Mammary epithelial cell (primary cell): ENCODE measurements at regions of chr10 and their contacts with region 1.

Region 1: DNA sequence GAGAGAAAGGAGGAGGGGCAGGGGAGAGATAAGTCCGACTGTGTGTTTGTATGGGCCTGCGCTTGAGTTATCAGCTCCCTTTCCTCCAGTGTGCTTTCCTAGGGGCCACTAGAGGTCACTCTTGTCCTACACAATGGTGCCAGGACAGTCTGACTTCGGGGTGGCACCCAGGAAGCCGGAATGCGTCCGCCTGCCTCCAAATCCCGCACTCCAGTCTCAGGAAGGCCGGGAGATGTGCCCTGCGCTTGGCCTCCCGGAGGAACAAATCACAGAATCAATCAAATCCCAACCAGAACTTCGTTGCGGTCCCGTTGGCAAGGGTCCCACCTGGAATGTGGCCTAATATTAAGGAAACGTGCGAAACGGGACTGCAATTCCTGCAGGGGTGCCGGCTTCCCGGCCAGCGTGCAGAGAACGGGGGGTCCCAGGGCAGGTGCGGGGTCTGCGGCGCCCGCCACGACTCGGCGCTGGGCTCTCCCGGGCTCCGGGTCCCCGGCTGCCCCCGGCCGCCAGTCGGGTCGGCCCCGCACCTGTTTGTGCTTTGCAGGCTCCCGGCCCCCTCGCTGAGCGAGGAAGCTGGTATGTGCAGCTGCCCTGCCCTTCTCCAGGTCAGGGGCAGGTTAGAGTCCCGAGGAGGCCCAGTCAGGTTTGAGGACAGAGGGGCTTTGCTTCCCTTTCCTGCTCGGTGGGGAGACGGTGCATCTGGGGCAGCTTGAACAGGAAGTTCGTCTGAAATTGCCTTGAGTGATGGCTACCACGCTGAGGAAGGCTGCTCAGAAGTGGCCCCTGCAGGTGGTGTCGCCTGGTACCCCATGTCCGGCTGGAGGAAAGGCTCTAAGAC is 21.0 kb upstream of the HPS1 start:
- DNase-seq: peak; percentile 73
- H3K4me3 ChIP-seq: peak overlapping the region; percentile 47 to 50 (median 48)
- H3K27ac ChIP-seq: no peak overlapping the region
- H3K4me1 ChIP-seq: peaks cover 7% of the 10 kb centered on the region
- H3K27me3 ChIP-seq: no peaks in the 10 kb centered on the region
- CTCF ChIP-seq: peak; percentile 85 to 91

Region 2: GRCh38 chr10:98425511-98426352 is 42.0 kb before region 1 on chr10:
- CTCF ChIA-PET with region 1: no interaction called
- dilution Hi-C with region 1: no loop called
- in situ Hi-C with region 1: no loop called
- intact Hi-C with region 1: loop called (anchors 2 kb)
- DNase-seq: peak; percentile 24
- H3K4me3 ChIP-seq: no peak overlapping the region
- H3K27ac ChIP-seq: no peak overlapping the region
- H3K4me1 ChIP-seq: no peaks in the 10 kb centered on the region
- H3K27me3 ChIP-seq: no peaks in the 10 kb centered on the region
- CTCF ChIP-seq: peak; percentile 88 to 93

Region 3: DNA sequence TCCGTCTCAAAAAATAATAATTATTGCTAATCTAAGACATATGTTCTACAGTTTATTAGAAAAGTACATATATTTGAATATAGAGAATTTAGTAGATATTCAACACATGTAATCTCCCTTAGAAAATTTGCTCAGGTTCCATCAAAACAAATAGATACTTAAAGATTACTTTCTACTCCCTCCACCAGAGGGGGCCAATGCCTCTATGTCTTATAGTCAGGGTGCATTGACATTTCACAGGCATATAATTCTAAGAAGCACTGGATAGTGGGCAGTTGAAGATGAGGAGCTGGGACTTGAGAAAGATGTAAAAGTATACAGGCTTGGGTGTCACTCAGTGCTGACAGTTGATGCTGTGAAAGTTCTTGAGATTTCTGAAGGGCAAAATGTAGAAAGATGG is 280.6 kb after region 1 on chr10:
- CTCF ChIA-PET with region 1: interaction called, 3 read pairs
- dilution Hi-C with region 1: no loop called
- in situ Hi-C with region 1: no loop called
- intact Hi-C with region 1: loop called (anchors 1 kb)
- DNase-seq: peak; percentile 23
- H3K4me3 ChIP-seq: no peak overlapping the region
- H3K27ac ChIP-seq: no peak overlapping the region
- H3K4me1 ChIP-seq: no peaks in the 10 kb centered on the region
- H3K27me3 ChIP-seq: peaks cover 2% of the 10 kb centered on the region
- CTCF ChIP-seq: peak; percentile 31 to 63

Region 4: DNA sequence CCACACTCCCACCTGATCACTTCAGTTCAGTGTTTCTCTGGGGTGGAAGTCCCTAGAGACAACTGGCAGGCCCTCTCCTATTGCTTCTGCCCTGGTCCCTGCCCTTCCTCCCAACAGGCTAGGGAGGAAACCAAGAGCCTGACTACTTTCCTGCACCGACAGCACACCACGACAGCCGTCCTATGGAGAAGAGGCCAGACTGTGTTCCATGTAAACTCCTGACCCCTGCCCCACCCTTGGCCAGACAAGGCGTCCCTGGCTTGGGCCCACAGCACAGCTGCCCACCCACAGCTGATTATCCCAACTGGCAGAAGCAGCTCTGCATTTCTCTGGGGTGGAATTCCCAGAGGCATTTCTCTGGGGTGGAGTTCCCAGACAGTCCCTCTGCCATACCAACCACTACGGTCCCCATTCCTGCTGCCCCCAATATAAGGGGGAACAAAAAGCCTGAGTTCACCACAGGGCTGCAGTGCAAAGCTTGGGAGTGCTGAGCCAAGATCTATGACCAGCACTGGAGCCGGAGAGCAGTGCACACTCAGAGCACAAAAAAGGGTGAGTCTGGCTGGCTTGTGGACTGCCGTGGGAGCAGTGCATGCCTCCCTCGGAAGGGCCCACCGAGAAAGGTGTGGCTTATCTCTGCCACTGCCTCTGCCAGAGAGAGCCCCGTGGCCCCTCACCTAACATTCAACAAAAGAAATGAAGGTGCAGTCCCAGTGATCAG is 574.5 kb after region 1 on chr10:
- CTCF ChIA-PET with region 1: no interaction called
- dilution Hi-C with region 1: no loop called
- in situ Hi-C with region 1: loop called in 1 of 2 experiments (anchors 5 kb)
- intact Hi-C with region 1: loop called (anchors 1 kb)
- DNase-seq: no peak
- H3K4me3 ChIP-seq: no peak overlapping the region
- H3K27ac ChIP-seq: no peak overlapping the region
- H3K4me1 ChIP-seq: no peaks in the 10 kb centered on the region
- H3K27me3 ChIP-seq: no peaks in the 10 kb centered on the region
- CTCF ChIP-seq: no peak

Region 5: GRCh38 chr10:99234041-99234790 is 766.5 kb after region 1 on chr10:
- CTCF ChIA-PET with region 1: interaction called, 3 read pairs
- dilution Hi-C with region 1: no loop called
- in situ Hi-C with region 1: loop called in 1 of 2 experiments (anchors 25 kb)
- intact Hi-C with region 1: no loop called
- DNase-seq: peak; percentile 18
- H3K4me3 ChIP-seq: peak overlapping the region; percentile 20 to 41 (median 36)
- H3K27ac ChIP-seq: no peak overlapping the region
- H3K4me1 ChIP-seq: no peaks in the 10 kb centered on the region
- H3K27me3 ChIP-seq: peaks cover 57% of the 10 kb centered on the region
- CTCF ChIP-seq: no peak

Region 6: GRCh38 chr10:99276848-99277486 is 809.2 kb after region 1 on chr10:
- CTCF ChIA-PET with region 1: no interaction called
- dilution Hi-C with region 1: no loop called
- in situ Hi-C with region 1: no loop called
- intact Hi-C with region 1: loop called (anchors 1 kb)
- DNase-seq: no peak
- H3K4me3 ChIP-seq: no peak overlapping the region
- H3K27ac ChIP-seq: no peak overlapping the region
- H3K4me1 ChIP-seq: peaks cover 4% of the 10 kb centered on the region
- H3K27me3 ChIP-seq: no peaks in the 10 kb centered on the region
- CTCF ChIP-seq: peak; percentile 42 to 48